HepG2 (cell line): ENCODE measurements at regions of chr17 and their contacts with region 1.

Region 1: DNA sequence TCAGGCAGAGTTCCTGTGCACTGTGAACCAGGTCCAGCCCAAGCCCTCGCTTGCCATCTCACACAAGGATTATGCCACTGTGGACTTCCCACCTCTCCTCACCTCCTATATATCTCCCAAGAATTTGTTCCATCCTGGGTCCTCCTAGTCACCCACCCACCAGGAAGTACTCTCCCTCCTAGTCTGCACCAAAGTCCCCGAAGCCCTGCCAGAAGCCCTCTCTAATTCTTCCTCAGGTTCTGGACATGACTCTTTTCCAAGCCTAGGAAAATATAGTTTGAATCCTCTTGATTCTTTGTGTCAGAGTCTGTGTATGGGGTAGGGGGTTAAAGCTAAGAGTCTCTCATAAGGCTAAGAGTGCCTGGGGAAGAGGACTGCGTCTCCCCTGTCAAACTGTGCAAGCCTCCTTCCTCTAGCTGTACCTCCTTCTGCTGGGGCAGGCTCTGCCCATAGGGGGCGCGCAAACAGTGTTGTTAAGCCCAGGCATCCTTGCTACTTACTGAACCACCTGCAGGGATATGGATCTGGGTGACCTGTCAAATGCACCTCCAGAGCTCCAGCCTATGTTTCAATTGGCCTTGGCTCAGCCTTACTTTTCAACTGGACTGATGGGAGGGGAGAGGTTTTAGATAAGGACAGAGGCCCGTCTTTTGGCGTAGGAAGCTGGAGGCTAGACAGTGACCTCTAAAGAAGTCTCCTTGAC is 16.6 kb upstream of the DLX4 start:
- DNase-seq: peak; percentile 78
- ATAC-seq: peak; percentile 95
- H3K4me3 ChIP-seq: no peak overlapping the region
- H3K27ac ChIP-seq: no peak overlapping the region
- H3K4me1 ChIP-seq: peaks cover 22% of the 10 kb centered on the region
- H3K27me3 ChIP-seq: peaks cover 5 to 53% of the 10 kb centered on the region in 2 experiments; a peak in 4 of 5 replicates
- CTCF ChIP-seq: peak; percentile 95
- EP300 ChIP-seq: 0 out of 4 replicates have a peak, but pooled peaks of 1 of the 2 experiments have one; percentile 9
- POLR2A ChIP-seq: no peak
- RAD21 ChIP-seq: peak; percentile 74

Region 2: GRCh38 chr17:49880291-49881053 is 71.9 kb before region 1 on chr17:
- CTCF ChIA-PET with region 1: interaction called, 3 read pairs
- POLR2A ChIA-PET with region 1: no interaction called
- in situ Hi-C with region 1: no loop called
- intact Hi-C with region 1: loop called (anchors 1 kb)
- DNase-seq: peak; percentile 57
- ATAC-seq: peak; percentile 96
- H3K4me3 ChIP-seq: peak overlapping the region in 1 of 3 experiments; percentile 20; a peak in 1 of 6 replicates
- H3K27ac ChIP-seq: no peak overlapping the region
- H3K4me1 ChIP-seq: peaks cover 16% of the 10 kb centered on the region
- H3K27me3 ChIP-seq: peaks cover 2 to 53% of the 10 kb centered on the region in 2 experiments; a peak in 4 of 5 replicates
- CTCF ChIP-seq: peak; percentile 99
- EP300 ChIP-seq: no peak
- POLR2A ChIP-seq: no peak
- RAD21 ChIP-seq: peak; percentile 99

Region 3: GRCh38 chr17:50037321-50038071 is 85.1 kb after region 1 on chr17:
- CTCF ChIA-PET with region 1: no interaction called
- POLR2A ChIA-PET with region 1: no interaction called
- in situ Hi-C with region 1: no loop called
- intact Hi-C with region 1: no loop called
- DNase-seq: no peak
- ATAC-seq: peak; percentile 15
- H3K4me3 ChIP-seq: no peak overlapping the region
- H3K27ac ChIP-seq: no peak overlapping the region
- H3K4me1 ChIP-seq: peaks cover 34% of the 10 kb centered on the region
- H3K27me3 ChIP-seq: peaks cover 0 to 9% of the 10 kb centered on the region in 2 experiments; a peak in 3 of 5 replicates
- CTCF ChIP-seq: no peak
- EP300 ChIP-seq: no peak
- POLR2A ChIP-seq: no peak
- RAD21 ChIP-seq: no peak